CD8-positive, alpha-beta memory T cell (primary cell): ENCODE measurements at regions of chr1 and their contacts with region 1.

Region 1: DNA sequence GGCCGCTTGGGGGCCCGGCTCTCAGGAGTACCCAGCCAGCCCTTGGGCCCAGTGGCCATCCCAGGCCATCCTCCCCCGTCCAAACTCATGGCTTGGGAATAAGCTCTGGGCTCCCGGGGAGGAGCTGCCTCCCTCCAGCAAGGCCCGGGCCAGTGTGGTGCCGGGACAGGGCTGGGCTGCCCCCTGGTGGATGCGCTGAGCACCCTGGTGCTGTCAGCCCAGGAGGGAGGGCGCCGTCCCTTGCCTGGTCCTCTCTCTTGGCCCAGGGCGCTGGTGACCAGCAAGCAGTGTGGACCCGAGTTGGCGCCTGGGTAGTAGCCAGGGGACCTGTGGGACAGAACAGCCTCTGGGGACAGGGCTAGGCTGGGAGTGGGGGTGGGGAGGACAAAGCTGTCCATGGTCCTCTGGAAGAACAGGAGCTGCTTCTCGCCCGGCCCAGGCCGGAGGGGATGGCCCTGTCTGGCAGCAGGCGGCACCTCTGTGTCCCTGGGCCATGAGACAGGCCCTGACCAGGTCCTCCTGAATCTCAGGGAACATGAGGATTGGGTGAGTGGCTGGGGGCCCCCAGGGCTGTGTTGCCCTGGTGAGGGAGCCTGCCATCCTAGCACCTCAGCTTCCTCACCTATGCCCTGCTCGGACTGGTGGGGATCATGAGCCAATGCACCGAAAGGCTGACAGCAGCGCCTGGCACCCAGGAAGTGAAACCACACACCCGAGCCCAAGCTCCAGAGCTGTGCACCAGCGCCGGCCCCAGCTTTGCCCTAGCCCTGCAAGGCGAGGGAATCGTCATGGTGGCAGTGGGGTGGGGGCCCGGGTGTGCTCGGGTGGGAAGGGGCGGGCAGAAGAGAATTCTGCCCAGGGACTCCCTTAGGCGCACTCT is 9.4 kb downstream of the MORN1 start:
- DNase-seq: peak; percentile 61 to 83 (median 70)
- H3K4me3 ChIP-seq: no peak overlapping the region
- H3K4me3 Mint-ChIP-seq: no peak overlapping the region
- H3K27ac ChIP-seq: no peak overlapping the region
- H3K27ac Mint-ChIP-seq: no peak overlapping the region
- H3K4me1 ChIP-seq: peaks cover 11% of the 10 kb centered on the region
- H3K4me1 Mint-ChIP-seq: peaks cover 0 to 3% (median 3%) of the 10 kb centered on the region in 3 donors
- H3K27me3 ChIP-seq: no peaks in the 10 kb centered on the region
- H3K27me3 Mint-ChIP-seq: no peaks in the 10 kb centered on the region

Region 2: GRCh38 chr1:2189459-2190425 is 192.2 kb before region 1 on chr1:
- CTCF ChIA-PET with region 1: interaction called, 114 read pairs
- POLR2A ChIA-PET with region 1: interaction called, 11 read pairs
- DNase-seq: peak; percentile 90 to 93 (median 91)
- H3K4me3 ChIP-seq: peak overlapping the region; percentile 73
- H3K4me3 Mint-ChIP-seq: peak overlapping the region; percentile 57 to 87 (median 81)
- H3K27ac ChIP-seq: peak overlapping the region; percentile 66
- H3K27ac Mint-ChIP-seq: peak overlapping the region; percentile 87 to 98 (median 96)
- H3K4me1 ChIP-seq: peaks cover 11% of the 10 kb centered on the region
- H3K4me1 Mint-ChIP-seq: peaks cover 4 to 25% (median 9%) of the 10 kb centered on the region in 3 donors
- H3K27me3 ChIP-seq: no peaks in the 10 kb centered on the region
- H3K27me3 Mint-ChIP-seq: no peaks in the 10 kb centered on the region

Region 3: GRCh38 chr1:2205191-2205952 is 176.6 kb before region 1 on chr1:
- CTCF ChIA-PET with region 1: interaction called, 16 read pairs
- POLR2A ChIA-PET with region 1: no interaction called
- DNase-seq: peak; percentile 89 to 96 (median 91)
- H3K4me3 ChIP-seq: peak overlapping the region; percentile 58
- H3K4me3 Mint-ChIP-seq: peak overlapping the region; percentile 46 to 88 (median 66)
- H3K27ac ChIP-seq: peak overlapping the region; percentile 38
- H3K27ac Mint-ChIP-seq: peak overlapping the region in 4 of 8 donors; percentile 3 to 68 (median 40)
- H3K4me1 ChIP-seq: peaks cover 9% of the 10 kb centered on the region
- H3K4me1 Mint-ChIP-seq: peaks cover 0 to 4% (median 2%) of the 10 kb centered on the region in 3 donors
- H3K27me3 ChIP-seq: no peaks in the 10 kb centered on the region
- H3K27me3 Mint-ChIP-seq: no peaks in the 10 kb centered on the region